Heart right ventricle (tissue), 16 donors: ENCODE measurements at regions of chr10 and their contacts with region 1.

Region 1: DNA sequence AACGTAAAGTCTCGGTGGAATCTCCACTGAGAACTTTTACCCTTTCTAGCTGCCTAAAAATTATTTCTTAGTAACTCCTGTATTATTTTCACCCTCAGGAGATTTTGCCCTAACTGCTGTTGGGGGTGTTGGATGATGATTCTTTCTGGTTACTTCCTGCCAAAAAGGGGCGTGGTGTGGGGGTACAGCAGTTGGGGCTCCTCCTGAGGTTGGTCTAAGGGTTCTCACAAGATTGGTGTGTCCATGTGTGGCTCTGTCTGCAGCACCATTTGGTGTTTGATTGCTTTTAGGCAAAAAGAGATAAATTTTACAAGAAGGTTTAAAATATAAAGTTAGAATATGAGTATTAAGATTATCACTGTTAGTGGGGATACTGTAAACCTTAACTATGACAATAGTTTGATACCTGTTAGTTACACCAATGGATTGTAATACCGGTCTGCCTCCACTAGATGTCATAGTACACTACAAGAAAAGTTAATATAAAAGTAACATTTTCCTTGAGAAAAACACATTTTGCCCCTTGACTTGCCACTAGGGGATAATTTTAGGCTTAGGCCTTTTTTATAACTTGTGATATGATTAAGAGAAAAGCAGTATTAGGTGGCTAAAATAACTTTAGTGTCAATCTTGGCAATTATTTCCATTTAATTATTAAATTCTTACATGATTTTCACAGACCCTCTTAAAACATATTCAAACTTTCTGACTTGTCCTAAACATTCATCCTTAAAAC is 928.7 kb downstream of the IPMK start:
- DNase-seq: no peak
- ATAC-seq: no peak
- H3K4me3 ChIP-seq: no peak overlapping the region
- H3K27ac ChIP-seq: no peak overlapping the region
- H3K4me1 ChIP-seq: no peaks in the 10 kb centered on the region
- H3K27me3 ChIP-seq: no peaks in the 10 kb centered on the region
- CTCF ChIP-seq: peak; percentile 45 to 76 (median 65)

Region 2: GRCh38 chr10:57367412-57367811 is 28.4 kb after region 1 on chr10:
- intact Hi-C with region 1: no loop called
- DNase-seq: no peak
- ATAC-seq: no peak
- H3K4me3 ChIP-seq: no peak overlapping the region
- H3K27ac ChIP-seq: no peak overlapping the region
- H3K4me1 ChIP-seq: no peaks in the 10 kb centered on the region
- H3K27me3 ChIP-seq: no peaks in the 10 kb centered on the region
- CTCF ChIP-seq: no peak

Region 3: GRCh38 chr10:58054881-58055280 is 715.9 kb after region 1 on chr10:
- intact Hi-C with region 1: loop called in 9 of 10 experiments (anchors 5 to 10 kb)
- DNase-seq: no peak
- ATAC-seq: no peak
- H3K4me3 ChIP-seq: no peak overlapping the region
- H3K27ac ChIP-seq: no peak overlapping the region
- H3K4me1 ChIP-seq: no peaks in the 10 kb centered on the region
- H3K27me3 ChIP-seq: peaks cover 0 to 4% (median 0%) of the 10 kb centered on the region in 7 donors
- CTCF ChIP-seq: no peak

Region 4: GRCh38 chr10:58152673-58153263 is 813.8 kb after region 1 on chr10:
- intact Hi-C with region 1: loop called in 4 of 10 experiments (anchors 10 kb)
- DNase-seq: peak in 1 of 2 donors; percentile 18
- ATAC-seq: peak in 1 of 8 donors; percentile 20
- H3K4me3 ChIP-seq: no peak overlapping the region
- H3K27ac ChIP-seq: no peak overlapping the region
- H3K4me1 ChIP-seq: peaks cover 0 to 7% (median 0%) of the 10 kb centered on the region in 9 donors
- H3K27me3 ChIP-seq: peaks cover 0 to 7% (median 3%) of the 10 kb centered on the region in 7 donors
- CTCF ChIP-seq: peak in 7 of 9 donors; percentile 45 to 62 (median 53)

Region 5: GRCh38 chr10:58266826-58267712 is 928.1 kb after region 1 on chr10:
- intact Hi-C with region 1: no loop called
- DNase-seq: peak; percentile 42 to 60
- ATAC-seq: peak in 7 of 8 donors; percentile 1 to 8 (median 2)
- H3K4me3 ChIP-seq: peak overlapping the region; percentile 72 to 87 (median 82)
- H3K27ac ChIP-seq: peak overlapping the region; percentile 82 to 97 (median 94)
- H3K4me1 ChIP-seq: peaks cover 0 to 52% (median 33%) of the 10 kb centered on the region in 9 donors
- H3K27me3 ChIP-seq: no peaks in the 10 kb centered on the region
- CTCF ChIP-seq: peak in 1 of 9 donors; percentile 17